Posterior cingulate gyrus (tissue), 11 donors: ENCODE measurements at regions of chr19 and their contacts with region 1.

Region 1: DNA sequence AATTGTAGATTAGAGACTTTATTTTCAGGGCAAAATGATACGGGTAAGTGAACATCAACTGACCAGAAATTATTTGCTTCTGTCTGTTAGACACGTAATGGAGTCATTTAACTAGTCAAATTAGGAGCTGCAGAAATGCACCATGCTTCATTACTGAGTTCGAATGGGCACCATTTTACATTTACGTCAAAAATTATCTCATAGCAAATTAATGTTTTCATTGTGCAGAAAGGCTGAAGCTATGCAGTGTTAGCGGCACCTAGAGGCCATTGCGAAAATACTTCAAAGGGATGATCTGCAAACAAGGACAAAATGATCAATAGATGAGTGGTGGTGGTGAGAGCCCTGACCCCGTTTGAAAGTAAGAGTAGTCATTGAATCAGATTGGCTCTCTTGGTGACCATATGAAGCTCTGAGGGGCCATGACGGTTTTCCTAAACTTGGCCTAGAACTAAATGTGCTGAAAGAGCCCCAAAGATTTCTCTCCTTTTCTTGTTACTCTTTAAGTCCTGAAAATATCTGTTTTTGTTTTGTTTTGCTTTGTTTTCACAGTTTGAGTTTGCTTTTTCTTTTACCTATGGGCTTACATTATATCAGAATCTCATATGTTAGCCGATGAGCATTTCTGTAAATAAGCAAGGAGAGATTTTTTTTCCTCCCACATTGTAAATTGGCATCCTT is 277.9 kb downstream of the ZNF536 start:
- DNase-seq: peak in 3 of 10 donors; percentile 54 to 65 (median 62)

Region 2: DNA sequence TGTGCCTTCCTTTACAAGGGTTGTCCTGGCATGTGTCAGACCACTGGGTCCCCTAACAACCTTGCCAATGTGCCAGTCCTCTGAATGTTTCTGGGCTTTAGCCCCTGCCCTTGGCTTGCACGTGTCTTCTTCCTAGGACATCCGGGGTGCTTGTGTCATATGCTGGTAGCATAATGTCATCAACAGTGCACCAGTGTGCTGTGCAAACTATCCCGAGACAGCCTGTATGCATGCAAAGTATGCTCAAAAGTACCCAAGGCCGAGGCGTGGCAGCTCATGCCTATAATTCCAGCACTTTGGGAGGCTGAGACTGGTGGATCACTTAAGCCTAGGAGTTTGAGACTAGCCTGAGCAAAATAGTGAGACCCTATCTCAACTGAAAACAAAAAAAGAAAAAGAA is 914.3 kb before region 1 on chr19:
- intact Hi-C with region 1: loop called (anchors 10 kb)
- DNase-seq: peak in 1 of 10 donors; percentile 20

Region 3: DNA sequence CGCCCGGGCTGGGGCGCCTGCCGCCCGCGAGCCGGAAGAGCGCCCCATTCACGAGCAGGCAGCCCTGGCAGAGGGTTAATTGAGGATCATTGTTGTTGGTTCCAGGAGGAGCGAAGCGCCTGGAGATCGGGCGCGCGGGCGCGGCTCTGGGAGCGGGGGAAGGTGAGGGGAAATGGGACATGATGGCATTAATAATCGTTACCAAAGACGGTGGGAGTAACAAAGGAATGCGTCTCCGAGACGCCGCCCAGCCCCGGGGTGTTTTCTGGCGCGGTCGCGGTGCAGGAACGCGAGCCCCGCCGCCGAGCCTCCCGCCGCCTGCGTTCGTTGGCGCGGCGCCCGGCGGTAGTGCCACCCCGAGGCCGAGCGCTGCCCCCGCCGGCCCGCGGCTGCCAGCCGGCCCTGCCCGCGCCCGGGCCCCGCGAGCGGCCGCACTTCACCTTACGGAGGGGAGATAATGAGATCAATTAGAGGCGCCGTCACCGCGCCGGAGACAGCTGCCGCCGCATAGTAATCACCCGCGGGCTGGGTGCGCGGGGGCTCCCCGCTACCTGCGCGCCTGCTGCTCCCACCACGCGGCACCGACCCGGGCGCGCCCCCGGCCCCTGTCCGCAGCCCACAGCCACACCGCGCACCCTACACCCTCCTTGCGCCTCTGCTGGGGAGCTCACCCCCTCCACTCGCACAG is 275.1 kb before region 1 on chr19:
- intact Hi-C with region 1: loop called (anchors 10 kb)
- DNase-seq: peak in 4 of 10 donors; percentile 19 to 88 (median 74)

Region 4: GRCh38 chr19:30587869-30588268 is 62.2 kb before region 1 on chr19:
- intact Hi-C with region 1: loop called (anchors 10 kb)
- DNase-seq: peak in 3 of 10 donors; percentile 43 to 91 (median 44)